ENCODE measurements at regions of chr17 and their contacts with region 1.

Region 1: GRCh38 chr17:43766413-43767052 is 7.9 kb upstream of the SOST start:
- DNase-seq: peak in 3 of 5 donors; percentile 10 to 36 (median 29)
- H3K4me3 ChIP-seq: no peak overlapping the region
- H3K4me3 Mint-ChIP-seq: no peak overlapping the region
- H3K27ac ChIP-seq: no peak overlapping the region
- H3K27ac Mint-ChIP-seq: no peak overlapping the region
- H3K4me1 ChIP-seq: no peaks in the 10 kb centered on the region
- H3K4me1 Mint-ChIP-seq: no peaks in the 10 kb centered on the region
- H3K27me3 ChIP-seq: no peaks in the 10 kb centered on the region
- H3K27me3 Mint-ChIP-seq: peaks cover 0 to 2% of the 10 kb centered on the region in 2 donors

Region 2: DNA sequence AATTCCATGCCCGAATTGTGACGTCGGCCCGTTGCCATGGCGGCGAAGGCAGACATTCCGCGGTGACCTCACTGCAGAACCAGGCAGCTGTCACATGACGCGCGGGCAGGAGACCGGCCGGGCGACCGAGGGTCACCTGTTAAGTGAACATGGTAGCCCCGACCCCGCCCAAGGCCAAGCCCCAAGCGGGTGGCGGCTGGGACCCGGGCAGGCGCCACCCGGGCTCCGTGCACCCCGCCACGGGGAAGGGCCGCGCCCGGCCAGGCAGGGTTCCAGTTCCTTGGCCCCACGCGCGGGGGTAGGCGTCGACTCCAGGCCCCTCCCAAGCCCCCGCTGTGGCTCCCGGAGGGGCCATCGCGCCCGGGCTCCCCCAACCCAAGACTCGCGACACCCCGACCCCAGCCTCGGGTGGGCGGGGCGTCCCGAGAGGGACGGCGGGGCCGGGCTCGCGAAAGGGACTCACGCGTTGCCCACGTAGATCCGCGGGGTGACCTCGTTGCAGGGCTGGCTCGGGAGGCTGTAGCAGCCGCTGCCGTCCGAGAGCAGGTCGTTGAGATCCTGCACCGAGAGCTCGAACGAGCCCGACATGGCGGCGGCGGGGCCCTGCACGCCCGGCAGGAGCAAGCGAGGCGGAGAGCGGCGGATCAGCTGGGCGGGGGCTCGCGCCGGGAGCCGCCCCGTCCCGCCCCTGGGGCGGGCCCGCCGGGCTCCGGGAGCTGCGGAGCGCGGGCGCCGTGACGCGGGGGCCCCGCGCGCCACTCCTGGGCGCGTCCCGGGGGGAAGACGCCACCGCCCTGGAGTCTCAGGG is 12.0 kb after region 1 on chr17 and contains the start of gene DUSP3:
- CTCF ChIA-PET with region 1: interaction called, 20 read pairs
- POLR2A ChIA-PET with region 1: interaction called, 3 read pairs
- intact Hi-C with region 1: no loop called
- DNase-seq: peak; percentile 68 to 79 (median 77)
- H3K4me3 ChIP-seq: peak within 1 kb of the TSS; percentile 29 to 77
- H3K4me3 Mint-ChIP-seq: peak within 1 kb of the TSS; percentile 84 to 93 (median 86)
- H3K27ac ChIP-seq: peak within 1 kb of the TSS; percentile 67
- H3K27ac Mint-ChIP-seq: peak within 1 kb of the TSS; percentile 72 to 89 (median 82)
- H3K4me1 ChIP-seq: peaks cover 10% of the 10 kb centered on the region
- H3K4me1 Mint-ChIP-seq: peaks cover 0 to 13% (median 4%) of the 10 kb centered on the region in 4 donors
- H3K27me3 ChIP-seq: peaks cover 4% of the 10 kb centered on the region
- H3K27me3 Mint-ChIP-seq: peaks cover 11 to 16% of the 10 kb centered on the region in 2 donors
- total RNA-seq, gene DUSP3: 10.3 to 13.1 TPM

Region 3: GRCh38 chr17:43784628-43785101 is 18.1 kb after region 1 on chr17:
- CTCF ChIA-PET with region 1: interaction called, 11 read pairs
- POLR2A ChIA-PET with region 1: no interaction called
- intact Hi-C with region 1: no loop called
- DNase-seq: no peak
- H3K4me3 ChIP-seq: no peak overlapping the region
- H3K4me3 Mint-ChIP-seq: no peak overlapping the region
- H3K27ac ChIP-seq: no peak overlapping the region
- H3K27ac Mint-ChIP-seq: no peak overlapping the region
- H3K4me1 ChIP-seq: peaks cover under 1% of the 10 kb centered on the region
- H3K4me1 Mint-ChIP-seq: peaks cover 0 to 2% (median 1%) of the 10 kb centered on the region in 4 donors
- H3K27me3 ChIP-seq: peaks cover 4% of the 10 kb centered on the region
- H3K27me3 Mint-ChIP-seq: peaks cover 18 to 23% of the 10 kb centered on the region in 2 donors

Region 4: DNA sequence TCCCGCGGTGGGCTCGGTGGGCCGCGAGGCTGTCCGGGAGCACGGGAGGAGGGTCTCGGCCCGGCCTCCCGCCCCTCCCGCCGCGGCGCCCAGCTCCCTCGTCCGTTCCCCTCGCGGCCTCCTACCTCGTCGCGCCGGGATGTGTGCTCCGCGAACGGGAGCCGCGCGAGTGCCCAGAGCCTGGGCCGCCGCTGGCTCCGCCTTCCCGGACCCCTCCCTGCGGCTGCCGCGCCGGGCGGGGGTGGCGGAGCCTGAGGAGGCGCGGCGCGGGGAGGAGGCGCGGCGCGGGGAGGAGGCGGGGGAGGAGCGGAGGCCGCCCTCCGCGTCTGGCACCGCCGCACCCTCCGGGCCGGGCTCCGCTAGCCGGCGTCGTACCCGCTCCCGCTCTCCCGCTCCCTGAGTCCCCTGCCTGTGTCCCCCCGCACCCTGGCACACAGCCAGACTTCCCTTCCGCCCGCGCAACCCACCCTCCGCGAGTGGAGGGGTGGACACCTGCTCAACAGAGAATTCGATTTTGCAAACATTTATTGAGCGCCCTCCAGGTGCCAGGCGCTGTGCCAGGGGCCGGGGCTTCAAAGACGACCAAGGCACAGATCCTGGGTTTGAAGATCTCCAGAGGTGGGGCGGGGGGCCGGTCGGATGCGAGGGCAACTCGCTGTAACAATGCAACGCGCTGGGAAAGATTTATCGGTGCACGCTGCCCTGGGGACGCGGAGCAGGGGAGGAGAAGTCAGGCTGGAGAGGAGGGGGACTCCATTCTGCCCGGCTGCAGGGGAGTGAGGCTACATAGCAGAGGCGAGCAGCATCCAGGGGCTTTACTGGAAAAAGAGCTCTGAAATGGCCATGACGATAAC is 66.7 kb after region 1 on chr17 and contains the start of gene MPP3:
- CTCF ChIA-PET with region 1: no interaction called
- POLR2A ChIA-PET with region 1: no interaction called
- intact Hi-C with region 1: no loop called
- DNase-seq: peak in 4 of 5 donors; percentile 47 to 57 (median 48)
- H3K4me3 ChIP-seq: peak within 1 kb of the TSS in 1 of 2 donors; percentile 54
- H3K4me3 Mint-ChIP-seq: peak within 1 kb of the TSS; percentile 79 to 89 (median 84)
- H3K27ac ChIP-seq: no peak within 1 kb of the TSS
- H3K27ac Mint-ChIP-seq: peak within 1 kb of the TSS in 5 of 7 donors; percentile 10 to 62 (median 53)
- H3K4me1 ChIP-seq: peaks cover 13% of the 10 kb centered on the region
- H3K4me1 Mint-ChIP-seq: peaks cover 5 to 27% (median 17%) of the 10 kb centered on the region in 4 donors
- H3K27me3 ChIP-seq: peaks cover 13% of the 10 kb centered on the region
- H3K27me3 Mint-ChIP-seq: peaks cover 13 to 26% of the 10 kb centered on the region in 2 donors
- total RNA-seq, gene MPP3: 0.32 TPM in 1 of 2 experiments, not detected in the other

Measured in CD4-positive, alpha-beta memory T cell (primary cell).